ENCODE measurements at regions of chrX and their contacts with region 1.

Region 1: DNA sequence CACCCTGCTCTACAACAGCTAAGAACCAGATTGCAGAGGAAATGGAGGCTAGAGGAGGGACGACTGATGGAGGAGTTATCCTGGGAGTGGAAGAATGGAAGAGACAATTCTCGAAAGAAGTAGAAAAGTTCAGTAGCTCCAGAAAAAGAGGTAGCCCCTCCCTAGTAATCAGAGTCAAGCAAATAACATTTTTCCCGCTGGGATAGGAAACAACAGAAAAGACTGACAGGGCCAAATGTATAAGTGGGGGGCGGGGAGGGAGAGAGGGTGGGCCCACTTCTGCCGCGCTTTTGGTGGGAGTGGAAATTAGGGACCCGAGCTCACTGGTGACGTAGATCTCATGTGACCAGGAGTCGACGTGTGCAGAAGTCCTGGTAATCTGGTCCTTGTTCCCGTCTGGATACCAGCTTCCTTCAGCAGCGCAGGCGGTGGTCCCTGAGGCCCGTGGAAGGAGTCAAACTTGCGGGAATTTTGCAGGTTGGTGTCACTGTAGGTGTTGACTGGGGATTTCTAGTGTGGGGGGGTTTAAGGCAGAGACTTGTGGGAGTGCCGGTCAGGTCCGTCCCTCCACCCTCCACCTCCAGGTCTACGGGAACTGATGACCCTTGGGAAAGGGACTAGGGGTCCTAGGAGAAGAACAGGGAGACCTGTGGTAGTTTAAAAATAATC is at the start of gene TCEAL9:
- DNase-seq: peak; percentile 71
- H3K4me3 ChIP-seq: peak within 1 kb of the TSS; percentile 69 to 74
- H3K27ac ChIP-seq: peak within 1 kb of the TSS; percentile 77 to 78
- H3K4me1 ChIP-seq: peaks cover 0 to 3% of the 10 kb centered on the region in 2 experiments; a peak in 2 of 4 replicates
- H3K27me3 ChIP-seq: no peaks in the 10 kb centered on the region
- CTCF ChIP-seq: no peak
- EP300 ChIP-seq: no peak
- RAD21 ChIP-seq: no peak
- polyA plus RNA-seq, gene TCEAL9: 27.7 and 29.5 TPM in 2 replicates

Region 2: GRCh38 chrX:103293118-103293517 is 63.1 kb before region 1 on chrX:
- CTCF ChIA-PET with region 1: no interaction called
- POLR2A ChIA-PET with region 1: no interaction called
- DNase-seq: no peak
- H3K4me3 ChIP-seq: no peak overlapping the region
- H3K27ac ChIP-seq: no peak overlapping the region
- H3K4me1 ChIP-seq: no peaks in the 10 kb centered on the region
- H3K27me3 ChIP-seq: no peaks in the 10 kb centered on the region; the same call in 1 of the 2 replicates
- CTCF ChIP-seq: no peak
- EP300 ChIP-seq: no peak
- RAD21 ChIP-seq: no peak

Region 3: GRCh38 chrX:103376118-103376978 is 20.1 kb after region 1 on chrX and contains the start of gene BEX3:
- CTCF ChIA-PET with region 1: no interaction called
- POLR2A ChIA-PET with region 1: interaction called, 11 read pairs
- DNase-seq: peak; percentile 85
- H3K4me3 ChIP-seq: peak within 1 kb of the TSS; percentile 60 to 67
- H3K27ac ChIP-seq: peak within 1 kb of the TSS; percentile 57 to 89
- H3K4me1 ChIP-seq: peaks cover 0 to 7% of the 10 kb centered on the region in 2 experiments; a peak in 2 of 4 replicates
- H3K27me3 ChIP-seq: no peaks in the 10 kb centered on the region; the same call in 1 of the 2 replicates
- CTCF ChIP-seq: no peak
- EP300 ChIP-seq: no peak
- RAD21 ChIP-seq: no peak
- polyA plus RNA-seq, gene BEX3: 292 and 392 TPM in 2 replicates

Region 4: GRCh38 chrX:103453655-103454054 is 97.4 kb after region 1 on chrX:
- CTCF ChIA-PET with region 1: no interaction called
- POLR2A ChIA-PET with region 1: no interaction called
- DNase-seq: no peak
- H3K4me3 ChIP-seq: no peak overlapping the region; a peak in 1 of 4 replicates
- H3K27ac ChIP-seq: peak overlapping the region in 1 of 2 experiments; percentile 91; a peak in 2 of 4 replicates
- H3K4me1 ChIP-seq: no peaks in the 10 kb centered on the region
- H3K27me3 ChIP-seq: no peaks in the 10 kb centered on the region
- CTCF ChIP-seq: no peak
- EP300 ChIP-seq: no peak
- RAD21 ChIP-seq: no peak